ENCODE measurements at regions of chrX and their contacts with region 1.

Region 1: GRCh38 chrX:21374163-21374993 is at the start of gene CNKSR2:
- DNase-seq: peak; percentile 70
- H3K4me3 Mint-ChIP-seq: peak within 1 kb of the TSS; percentile 84
- H3K27ac Mint-ChIP-seq: no peak within 1 kb of the TSS
- H3K4me1 Mint-ChIP-seq: peaks cover 25% of the 10 kb centered on the region
- H3K27me3 Mint-ChIP-seq: no peaks in the 10 kb centered on the region
- total RNA-seq, gene CNKSR2: 3.6 to 3.7 TPM

Region 2: DNA sequence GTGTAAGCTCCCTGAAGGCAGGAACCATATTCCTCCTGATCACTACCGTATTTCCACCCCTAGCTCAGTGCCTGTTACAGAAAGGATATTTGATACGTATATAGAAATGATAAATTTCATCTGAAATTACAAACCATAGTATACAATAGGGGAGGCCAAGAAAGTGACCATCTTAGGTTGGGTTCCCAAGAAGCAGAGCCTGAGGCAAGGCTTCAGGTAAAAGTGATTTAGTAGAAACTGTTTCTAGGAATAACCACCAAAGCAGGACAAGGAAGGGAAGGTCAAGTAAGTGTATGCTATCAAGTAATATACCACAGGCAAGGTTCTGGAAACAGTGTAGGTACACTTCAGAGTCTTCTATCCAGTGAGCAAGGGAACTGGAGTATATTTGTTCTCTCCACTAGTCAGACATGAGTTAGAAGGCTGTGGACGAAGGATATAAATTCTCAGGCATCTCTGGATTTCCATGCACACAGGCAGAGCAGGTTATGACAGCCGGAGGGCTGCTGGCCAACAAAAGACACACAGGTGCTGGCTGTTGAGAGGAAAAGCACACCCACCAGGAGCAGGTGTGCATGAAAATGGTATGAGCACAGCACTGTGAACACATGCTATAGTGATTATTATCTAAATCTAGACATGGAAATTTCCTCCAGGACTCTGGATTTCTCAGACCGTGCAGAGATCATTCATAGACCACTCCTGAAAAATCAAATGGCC is 663.2 kb before region 1 on chrX:
- CTCF ChIA-PET with region 1: no interaction called
- POLR2A ChIA-PET with region 1: no interaction called
- intact Hi-C with region 1: loop called (anchors 5 kb)
- DNase-seq: no peak
- H3K4me3 Mint-ChIP-seq: no peak overlapping the region
- H3K27ac Mint-ChIP-seq: no peak overlapping the region
- H3K4me1 Mint-ChIP-seq: no peaks in the 10 kb centered on the region
- H3K27me3 Mint-ChIP-seq: no peaks in the 10 kb centered on the region

Region 3: GRCh38 chrX:21438792-21439191 is 64.4 kb after region 1 on chrX:
- CTCF ChIA-PET with region 1: no interaction called
- POLR2A ChIA-PET with region 1: no interaction called
- intact Hi-C with region 1: loop called (anchors 5 kb)
- DNase-seq: no peak
- H3K4me3 Mint-ChIP-seq: peak overlapping the region; percentile 56
- H3K27ac Mint-ChIP-seq: peak overlapping the region; percentile 87
- H3K4me1 Mint-ChIP-seq: peaks cover 9% of the 10 kb centered on the region
- H3K27me3 Mint-ChIP-seq: no peaks in the 10 kb centered on the region

Measured in activated CD4-positive, alpha-beta memory T cell treated with anti-CD3 and anti-CD28 coated beads for 36 hours (primary cell).